Naive thymus-derived CD4-positive, alpha-beta T cell (primary cell): ENCODE measurements at regions of chr11 and their contacts with region 1.

Region 1: DNA sequence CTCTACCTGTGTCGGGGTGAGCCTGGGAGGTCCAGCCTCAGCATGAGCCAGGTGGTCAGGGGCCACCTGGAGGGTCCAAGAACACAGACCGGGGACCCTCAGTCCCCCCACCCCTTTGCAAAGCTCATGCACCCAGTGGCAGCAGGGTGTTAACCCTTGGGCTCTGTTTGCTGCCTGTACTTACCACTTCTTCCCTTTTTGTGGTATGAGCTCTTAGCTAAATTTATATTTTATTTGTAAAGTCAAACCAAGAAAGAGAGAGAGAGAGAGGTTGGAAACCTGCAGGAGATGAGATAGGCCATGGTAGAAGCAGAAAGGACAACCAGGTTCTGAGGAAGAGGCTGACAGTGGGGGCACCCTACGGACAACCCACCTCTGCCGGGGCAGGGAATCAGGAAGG is 29.9 kb downstream of the IL10RA start:
- DNase-seq: no peak
- ATAC-seq: no peak
- H3K4me3 ChIP-seq: peak overlapping the region; percentile 17
- H3K4me3 Mint-ChIP-seq: peak overlapping the region in 8 of 10 donors; percentile 58 to 75 (median 65)
- H3K27ac ChIP-seq: no peak overlapping the region
- H3K27ac Mint-ChIP-seq: peak overlapping the region in 7 of 9 donors; percentile 6 to 88 (median 32)
- H3K4me1 ChIP-seq: peaks cover 35 to 62% of the 10 kb centered on the region in 2 donors
- H3K4me1 Mint-ChIP-seq: peaks cover 44 to 57% (median 49%) of the 10 kb centered on the region in 7 donors
- H3K27me3 ChIP-seq: no peaks in the 10 kb centered on the region
- H3K27me3 Mint-ChIP-seq: peaks cover 0 to 4% (median 0%) of the 10 kb centered on the region in 5 donors

Region 2: GRCh38 chr11:118002541-118003423 is 13.3 kb before region 1 on chr11:
- CTCF ChIA-PET with region 1: interaction called, 4 read pairs
- POLR2A ChIA-PET with region 1: interaction called, 37 read pairs
- intact Hi-C with region 1: loop called (anchors 1 to 2 kb)
- DNase-seq: peak in 1 of 9 donors; percentile 70
- ATAC-seq: peak; percentile 55
- H3K4me3 ChIP-seq: peak overlapping the region; percentile 23
- H3K4me3 Mint-ChIP-seq: peak overlapping the region; percentile 1 to 82 (median 60)
- H3K27ac ChIP-seq: peak overlapping the region; percentile 58
- H3K27ac Mint-ChIP-seq: peak overlapping the region; percentile 51 to 98 (median 87)
- H3K4me1 ChIP-seq: peaks cover 64 to 96% of the 10 kb centered on the region in 2 donors
- H3K4me1 Mint-ChIP-seq: peaks cover 66 to 97% (median 80%) of the 10 kb centered on the region in 7 donors
- H3K27me3 ChIP-seq: no peaks in the 10 kb centered on the region
- H3K27me3 Mint-ChIP-seq: no peaks in the 10 kb centered on the region